Gastrocnemius medialis (tissue), 4 donors: ENCODE measurements at regions of chr16 and their contacts with region 1.

Region 1: GRCh38 chr16:24689145-24689544 is 40.3 kb upstream of the TNRC6A start:
- DNase-seq: no peak
- ATAC-seq: peak; percentile 66 to 80
- H3K4me3 ChIP-seq: no peak overlapping the region
- H3K27ac ChIP-seq: no peak overlapping the region
- H3K4me1 ChIP-seq: no peaks in the 10 kb centered on the region
- H3K27me3 ChIP-seq: no peaks in the 10 kb centered on the region
- CTCF ChIP-seq: peak in 4 of 5 experiments; percentile 35 to 47 (median 42)
- POLR2A ChIP-seq: no peak

Region 2: GRCh38 chr16:24516900-24517669 is 172.1 kb before region 1 on chr16:
- in situ Hi-C with region 1: no loop called
- intact Hi-C with region 1: loop called (anchors 5 kb)
- DNase-seq: peak; percentile 58 to 77
- ATAC-seq: peak; percentile 89 to 97
- H3K4me3 ChIP-seq: peak overlapping the region; percentile 23 to 35 (median 30)
- H3K27ac ChIP-seq: peak overlapping the region in 1 of 4 donors; percentile 9
- H3K4me1 ChIP-seq: no peaks in the 10 kb centered on the region
- H3K27me3 ChIP-seq: no peaks in the 10 kb centered on the region
- CTCF ChIP-seq: peak; percentile 73 to 90 (median 79)
- POLR2A ChIP-seq: no peak

Region 3: DNA sequence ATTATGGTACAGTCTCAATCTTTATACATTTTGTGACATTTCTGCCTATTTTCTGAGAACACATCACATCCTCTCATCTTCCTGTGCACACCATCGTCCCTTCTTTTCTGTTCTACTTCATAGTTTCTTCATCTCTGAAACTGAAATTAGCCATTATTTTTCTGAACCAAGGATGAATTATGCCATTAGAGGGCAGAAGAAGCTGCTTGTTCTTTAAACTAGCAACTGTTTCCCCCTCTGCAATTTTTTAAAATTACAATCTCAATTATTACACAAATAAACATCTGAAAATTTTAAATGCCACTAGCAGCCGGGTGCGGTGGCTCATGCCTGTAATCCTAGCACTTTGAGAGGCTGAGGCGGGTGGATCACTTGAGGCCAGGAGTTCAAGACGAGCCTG is 108.5 kb before region 1 on chr16:
- in situ Hi-C with region 1: loop called in 1 of 4 experiments (anchors 10 kb)
- intact Hi-C with region 1: no loop called
- DNase-seq: no peak
- ATAC-seq: no peak
- H3K4me3 ChIP-seq: no peak overlapping the region
- H3K27ac ChIP-seq: no peak overlapping the region
- H3K4me1 ChIP-seq: no peaks in the 10 kb centered on the region
- H3K27me3 ChIP-seq: no peaks in the 10 kb centered on the region
- CTCF ChIP-seq: peak in 1 of 5 experiments; percentile 24
- POLR2A ChIP-seq: no peak